Adrenal gland (tissue), 19 donors: ENCODE measurements at regions of chr1 and their contacts with region 1.

Region 1: GRCh38 chr1:8169364-8170058 is 143.4 kb upstream of the ERRFI1 start:
- DNase-seq: peak in 6 of 7 donors; percentile 44 to 87 (median 61)
- H3K4me3 ChIP-seq: no peak overlapping the region
- H3K27ac ChIP-seq: peak overlapping the region in 2 of 5 donors; percentile 68 to 74
- H3K4me1 ChIP-seq: peaks cover 0 to 12% of the 10 kb centered on the region in 2 donors
- H3K27me3 ChIP-seq: no peaks in the 10 kb centered on the region
- CTCF ChIP-seq: no peak
- POLR2A ChIP-seq: no peak

Region 2: DNA sequence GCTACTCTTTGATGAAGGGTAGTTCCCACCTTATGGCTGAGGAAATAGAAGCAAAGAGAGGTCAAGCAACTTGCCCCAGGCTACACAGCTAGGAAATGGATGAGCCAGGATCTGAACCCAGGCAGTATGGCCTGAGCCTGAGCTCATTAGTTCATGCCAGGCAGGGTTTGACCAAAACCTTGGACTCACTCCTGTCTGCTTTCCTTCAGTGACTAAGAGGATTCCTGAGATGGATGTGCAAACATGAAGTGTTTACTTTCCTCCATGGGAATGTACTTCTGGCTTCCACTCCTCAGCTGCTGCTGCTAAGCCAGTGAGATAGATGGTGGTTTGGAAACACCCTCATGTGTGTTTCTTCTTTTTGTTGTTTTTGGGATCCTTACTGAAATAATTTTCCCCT is 108.3 kb before region 1 on chr1:
- intact Hi-C with region 1: no loop called
- DNase-seq: peak in 4 of 7 donors; percentile 20 to 31 (median 26)
- H3K4me3 ChIP-seq: no peak overlapping the region
- H3K27ac ChIP-seq: peak overlapping the region in 1 of 5 donors; percentile 63
- H3K4me1 ChIP-seq: peaks cover 0 to 7% of the 10 kb centered on the region in 2 donors
- H3K27me3 ChIP-seq: no peaks in the 10 kb centered on the region
- CTCF ChIP-seq: no peak
- POLR2A ChIP-seq: no peak

Region 3: DNA sequence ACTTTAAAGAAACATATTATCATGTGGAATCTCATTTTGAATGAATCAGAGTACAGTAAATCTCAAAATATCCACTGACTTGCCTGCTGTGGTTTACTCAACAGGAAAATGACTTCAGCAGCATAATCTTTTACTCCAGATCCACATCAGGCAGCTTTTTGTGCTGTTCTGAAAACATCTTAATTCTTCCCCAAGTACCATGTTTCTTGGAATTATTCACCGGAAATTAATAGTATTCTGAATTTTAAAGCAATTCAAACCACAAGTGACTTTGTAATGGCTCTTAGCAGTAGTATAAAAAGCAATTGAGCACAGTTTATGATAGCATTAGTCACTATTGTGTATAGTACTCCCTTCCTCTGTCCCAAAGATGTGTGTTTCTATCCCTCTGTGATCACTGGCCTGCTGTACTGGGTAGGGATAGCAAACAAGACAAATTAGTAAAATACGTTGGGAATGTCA is 79.2 kb before region 1 on chr1:
- intact Hi-C with region 1: no loop called
- DNase-seq: no peak
- H3K4me3 ChIP-seq: no peak overlapping the region
- H3K27ac ChIP-seq: peak overlapping the region in 2 of 5 donors; percentile 53 to 55
- H3K4me1 ChIP-seq: peaks cover 0 to 20% of the 10 kb centered on the region in 2 donors
- H3K27me3 ChIP-seq: no peaks in the 10 kb centered on the region
- CTCF ChIP-seq: no peak
- POLR2A ChIP-seq: no peak

Region 4: GRCh38 chr1:8211589-8212442 is 42.3 kb after region 1 on chr1:
- intact Hi-C with region 1: loop called in 1 of 2 experiments (anchors 10 kb)
- DNase-seq: peak in 6 of 7 donors; percentile 37 to 70 (median 46)
- H3K4me3 ChIP-seq: no peak overlapping the region
- H3K27ac ChIP-seq: peak overlapping the region in 2 of 5 donors; percentile 48 to 79
- H3K4me1 ChIP-seq: peaks cover 11% of the 10 kb centered on the region in 2 donors
- H3K27me3 ChIP-seq: no peaks in the 10 kb centered on the region
- CTCF ChIP-seq: no peak
- POLR2A ChIP-seq: no peak